Mucosa of descending colon (tissue), 3 donors: ENCODE measurements at regions of chr10 and their contacts with region 1.

Region 1: DNA sequence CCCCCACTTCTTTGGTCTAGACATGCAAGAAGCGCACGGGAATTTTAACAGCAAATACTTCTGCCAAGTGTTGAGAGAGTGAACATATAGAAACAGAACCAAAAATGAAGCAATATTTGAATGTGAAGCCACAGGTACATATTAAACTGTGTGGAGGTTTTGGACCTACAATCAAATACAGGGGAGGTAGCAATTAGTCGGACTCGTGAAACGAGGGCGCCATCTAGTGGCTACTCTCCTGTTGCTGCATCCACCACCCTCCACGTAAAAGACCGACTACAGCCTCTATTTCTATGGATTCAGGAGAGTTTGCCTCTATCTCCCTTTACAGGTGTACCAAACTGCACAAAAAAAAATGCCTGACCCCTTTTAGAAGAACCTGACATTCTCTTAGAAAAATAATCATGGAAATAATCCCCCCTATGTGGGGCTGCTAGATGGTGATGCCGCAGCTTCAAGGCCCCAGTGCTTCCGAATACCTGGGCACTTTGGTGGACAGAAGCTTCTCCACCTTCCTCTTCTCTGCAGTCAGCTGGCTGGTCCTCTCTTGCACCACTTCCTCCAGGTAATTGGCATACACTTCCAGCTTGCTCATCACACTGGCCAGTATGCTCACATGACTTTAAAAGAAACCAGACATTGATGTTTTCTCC is 31.7 kb downstream of the TECTB start:
- DNase-seq: peak; percentile 64 to 95 (median 73)
- ATAC-seq: peak; percentile 95
- H3K4me3 ChIP-seq: no peak overlapping the region
- H3K4me1 ChIP-seq: no peaks in the 10 kb centered on the region
- CTCF ChIP-seq: peak; percentile 71

Region 2: DNA sequence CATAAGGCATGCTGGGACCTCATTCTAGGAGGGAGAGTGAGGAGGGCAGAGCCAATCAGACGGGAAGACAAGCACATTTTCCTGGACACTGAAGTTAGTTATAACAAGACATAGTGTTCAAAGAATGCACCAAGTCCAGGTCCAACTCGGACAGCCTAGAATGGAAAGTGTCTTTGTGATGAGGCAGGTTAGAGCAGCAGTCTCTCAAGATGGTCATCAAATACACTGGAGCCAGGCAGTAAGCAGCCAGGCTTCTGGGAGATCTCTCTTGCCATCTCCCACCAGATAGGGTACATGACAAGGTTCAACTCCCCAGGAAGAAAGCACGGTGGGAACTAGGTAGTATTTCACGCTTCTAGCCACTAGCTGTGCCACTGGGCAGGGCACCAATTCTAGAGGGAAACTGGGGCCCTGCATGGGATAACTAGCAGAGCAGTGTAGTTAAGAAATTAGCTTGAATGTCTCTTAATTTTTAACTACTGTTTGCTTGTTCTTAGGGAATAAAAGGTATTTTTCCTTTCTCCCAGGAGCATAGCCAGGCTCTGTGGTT is 123.8 kb before region 1 on chr10:
- intact Hi-C with region 1: loop called in 1 of 2 experiments (anchors 10 kb)
- DNase-seq: no peak
- ATAC-seq: no peak
- H3K4me3 ChIP-seq: no peak overlapping the region
- H3K4me1 ChIP-seq: no peaks in the 10 kb centered on the region
- CTCF ChIP-seq: no peak

Region 3: DNA sequence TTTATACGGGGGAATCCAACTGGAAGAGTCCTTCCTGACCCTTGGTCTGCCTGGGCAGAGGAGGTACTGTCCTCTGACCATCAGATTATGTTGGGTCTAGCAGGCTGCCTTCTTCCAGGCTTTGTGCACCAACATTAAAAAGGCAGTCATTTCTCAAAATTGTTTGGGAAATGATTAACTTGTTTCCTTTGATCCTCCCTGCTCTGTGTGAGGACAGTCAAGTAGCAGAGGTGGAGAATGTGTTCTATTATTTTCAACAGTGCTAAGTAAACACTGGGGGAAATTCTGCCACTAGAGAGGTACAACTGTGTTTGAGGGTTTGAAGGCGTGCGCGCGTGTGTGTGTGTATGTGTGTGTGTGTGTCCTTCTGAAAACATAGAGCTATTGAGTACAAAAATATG is 79.5 kb after region 1 on chr10:
- intact Hi-C with region 1: no loop called
- DNase-seq: peak in 1 of 3 donors; percentile 77
- ATAC-seq: peak; percentile 79
- H3K4me3 ChIP-seq: no peak overlapping the region
- H3K4me1 ChIP-seq: peaks cover 59% of the 10 kb centered on the region
- CTCF ChIP-seq: no peak

Region 4: GRCh38 chr10:112404616-112405015 is 89.7 kb after region 1 on chr10:
- intact Hi-C with region 1: no loop called
- DNase-seq: no peak
- ATAC-seq: peak; percentile 32
- H3K4me3 ChIP-seq: no peak overlapping the region
- H3K4me1 ChIP-seq: peaks cover 56% of the 10 kb centered on the region
- CTCF ChIP-seq: no peak

Region 5: DNA sequence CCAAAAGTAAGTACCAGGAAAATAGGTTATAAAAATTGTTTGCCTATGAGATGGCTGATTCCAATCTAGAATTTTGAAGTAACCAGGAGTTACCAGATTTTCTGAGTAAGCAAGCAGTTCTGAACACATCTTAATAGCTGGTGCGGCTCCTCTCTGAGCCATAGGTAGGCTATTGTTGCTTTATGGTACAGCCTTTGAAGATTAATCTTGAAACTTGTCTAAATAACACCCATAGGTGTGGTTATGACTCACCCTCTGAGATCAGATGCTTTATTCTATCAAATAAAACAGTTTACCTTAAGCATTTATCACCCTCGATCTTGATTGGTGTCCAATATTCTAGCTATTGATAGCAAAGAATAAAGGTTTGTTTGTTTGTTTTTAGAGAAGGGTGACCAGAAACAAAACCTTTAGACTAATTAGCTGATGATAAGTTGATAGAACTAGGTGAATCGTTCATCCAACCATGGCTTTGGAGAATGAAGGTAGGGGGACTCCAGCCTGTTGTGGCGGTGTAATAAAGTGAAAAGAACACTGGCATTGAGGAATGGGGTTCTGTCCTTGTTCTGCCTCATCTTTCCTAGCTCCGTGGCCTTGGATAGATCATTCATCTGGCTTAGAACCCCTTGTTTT is 204.3 kb after region 1 on chr10:
- intact Hi-C with region 1: no loop called
- DNase-seq: peak in 1 of 3 donors; percentile 35
- ATAC-seq: peak; percentile 98
- H3K4me3 ChIP-seq: no peak overlapping the region
- H3K4me1 ChIP-seq: no peaks in the 10 kb centered on the region
- CTCF ChIP-seq: no peak

Region 6: DNA sequence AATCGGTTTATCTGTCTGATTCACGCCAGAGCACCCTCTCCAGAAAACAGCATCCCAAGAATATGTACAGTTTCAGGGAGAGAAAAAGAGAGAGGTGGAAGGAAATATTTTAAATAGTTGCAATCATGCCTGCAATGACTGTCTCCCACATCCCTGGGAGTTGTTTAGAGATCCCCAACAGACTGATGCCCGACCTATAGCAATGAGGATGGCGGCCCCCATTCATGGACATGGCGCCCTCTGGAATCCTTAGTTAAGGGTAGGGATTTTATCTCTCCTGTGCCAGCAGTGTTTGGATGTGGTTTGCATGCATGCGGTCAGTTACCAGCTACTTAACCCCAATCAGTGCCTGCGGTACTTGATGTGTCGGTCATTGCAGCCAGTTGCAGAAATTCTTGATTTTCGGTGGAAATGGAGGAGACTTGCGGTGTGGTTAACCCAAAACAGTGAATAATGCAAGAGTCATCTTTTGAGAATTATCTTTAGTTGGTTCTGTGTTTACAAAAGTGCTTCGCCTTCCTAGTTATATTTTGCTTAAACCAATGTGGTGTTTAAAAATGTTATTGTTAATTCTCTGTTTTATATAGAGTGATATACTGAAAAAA is 449.1 kb after region 1 on chr10:
- intact Hi-C with region 1: no loop called
- DNase-seq: no peak
- ATAC-seq: no peak
- H3K4me3 ChIP-seq: no peak overlapping the region
- H3K4me1 ChIP-seq: no peaks in the 10 kb centered on the region
- CTCF ChIP-seq: no peak